ENCODE measurements at regions of chr16 and their contacts with region 1.

Region 1: GRCh38 chr16:55832758-55833540 is at the start of gene CES1:
- DNase-seq: peak; percentile 18
- H3K4me3 ChIP-seq: no peak within 1 kb of the TSS
- H3K27ac ChIP-seq: no peak within 1 kb of the TSS
- H3K4me1 ChIP-seq: no peaks in the 10 kb centered on the region
- H3K27me3 ChIP-seq: no peaks in the 10 kb centered on the region
- total RNA-seq, gene CES1: 0.76 TPM in 1 of 2 replicates, not detected in the other

Region 2: GRCh38 chr16:55622930-55623561 is 209.9 kb before region 1 on chr16:
- in situ Hi-C with region 1: no loop called
- DNase-seq: no peak
- H3K4me3 ChIP-seq: no peak overlapping the region
- H3K27ac ChIP-seq: no peak overlapping the region
- H3K4me1 ChIP-seq: no peaks in the 10 kb centered on the region
- H3K27me3 ChIP-seq: no peaks in the 10 kb centered on the region

Region 3: GRCh38 chr16:55687802-55688201 is 145.1 kb before region 1 on chr16:
- in situ Hi-C with region 1: no loop called
- DNase-seq: no peak
- H3K4me3 ChIP-seq: no peak overlapping the region
- H3K27ac ChIP-seq: no peak overlapping the region
- H3K4me1 ChIP-seq: no peaks in the 10 kb centered on the region
- H3K27me3 ChIP-seq: peaks cover 4% of the 10 kb centered on the region; the same call in 1 of the 2 replicates

Region 4: DNA sequence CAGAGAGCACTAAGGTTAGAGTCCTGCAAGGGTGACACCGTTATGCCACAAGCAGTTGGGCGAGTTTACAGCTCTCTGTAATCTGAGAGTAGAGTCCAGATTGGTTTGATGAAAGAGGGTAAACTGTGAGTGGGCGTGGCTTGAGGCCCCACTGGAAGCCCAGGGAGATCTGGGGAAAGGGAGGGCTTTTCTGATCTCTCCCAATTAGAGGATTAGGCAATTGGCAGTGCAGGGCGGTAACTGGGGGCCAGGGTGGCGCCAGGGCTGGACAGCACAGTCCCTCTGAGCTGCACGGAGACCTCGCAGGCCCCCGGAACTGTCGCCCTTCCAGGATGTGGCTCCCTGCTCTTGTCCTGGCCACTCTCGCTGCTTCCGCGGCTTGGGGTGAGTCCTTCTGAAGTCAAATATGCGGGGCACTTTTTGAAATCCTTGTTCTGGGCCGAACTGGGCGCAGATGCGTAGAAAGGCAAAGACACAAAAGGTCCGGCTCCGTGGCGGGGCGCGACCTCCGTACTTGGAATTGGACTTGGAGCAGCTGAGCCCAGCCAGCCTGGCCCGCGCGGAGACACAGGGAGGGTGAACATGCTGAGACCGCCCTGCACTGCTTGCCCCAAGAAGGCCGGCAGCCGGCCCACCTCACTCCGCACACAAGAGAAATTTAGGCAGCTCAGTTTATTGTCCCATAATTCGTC is 72.5 kb before region 1 on chr16:
- in situ Hi-C with region 1: loop called (anchors 5 kb)
- DNase-seq: peak; percentile 9
- H3K4me3 ChIP-seq: no peak overlapping the region
- H3K27ac ChIP-seq: no peak overlapping the region
- H3K4me1 ChIP-seq: no peaks in the 10 kb centered on the region
- H3K27me3 ChIP-seq: no peaks in the 10 kb centered on the region

Region 5: GRCh38 chr16:56667581-56668571 is 834.9 kb after region 1 on chr16 and contains the start of gene MT1G:
- in situ Hi-C with region 1: no loop called
- DNase-seq: peak; percentile 54
- H3K4me3 ChIP-seq: no peak within 1 kb of the TSS
- H3K27ac ChIP-seq: no peak within 1 kb of the TSS
- H3K4me1 ChIP-seq: no peaks in the 10 kb centered on the region
- H3K27me3 ChIP-seq: peaks cover 30% of the 10 kb centered on the region
- total RNA-seq, gene MT1G: not detected in 2 replicates